Endothelial cell of umbilical vein (primary cell): ENCODE measurements at regions of chr1 and their contacts with region 1.

Region 1: DNA sequence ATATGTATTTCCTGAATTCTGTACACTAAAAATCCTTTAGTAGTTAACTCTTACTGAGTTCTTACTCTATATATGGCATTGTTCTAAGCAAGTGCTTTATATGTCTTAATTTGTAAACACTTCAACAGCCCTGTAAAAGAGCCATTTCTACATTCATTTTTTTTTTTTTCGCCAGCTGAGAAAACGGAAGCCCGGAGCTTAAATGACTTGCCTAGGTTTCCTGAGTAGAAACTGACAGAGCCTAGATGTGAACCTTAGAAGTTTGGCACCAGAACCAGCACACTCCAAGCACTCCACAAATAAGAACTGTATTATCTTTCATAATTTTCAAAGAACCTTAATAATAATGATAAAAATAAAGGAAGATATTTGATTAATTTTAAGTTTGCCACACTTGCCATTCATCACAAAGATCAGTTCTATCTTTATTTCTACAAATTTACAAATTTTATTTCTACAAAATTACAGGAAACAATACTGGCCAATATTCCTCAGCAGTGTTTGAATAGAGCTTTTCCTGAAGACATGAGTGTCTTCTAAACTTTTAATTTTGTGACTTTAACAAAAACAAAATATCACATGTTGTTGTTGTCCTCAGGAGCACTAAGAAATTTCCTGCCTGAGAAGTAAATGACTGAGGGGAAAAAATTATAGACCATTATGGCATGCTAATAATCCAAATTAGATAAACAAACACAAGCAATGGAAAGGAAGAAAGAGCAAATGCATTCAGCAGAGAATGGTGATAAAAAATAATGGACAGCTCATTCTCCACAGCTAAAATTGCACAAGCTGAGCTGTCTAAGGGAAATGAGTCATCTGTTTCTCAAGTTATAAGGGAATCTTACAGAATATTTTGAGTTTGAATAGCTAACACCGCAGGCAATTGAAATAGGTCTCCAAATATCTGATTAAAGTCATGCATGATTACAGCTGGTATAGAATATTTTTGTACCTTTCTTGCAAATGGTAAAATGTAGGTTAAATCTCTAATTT is 71.2 kb downstream of the DPYD start:
- DNase-seq: peak; percentile 93
- H3K4me3 ChIP-seq: peak overlapping the region in 1 of 3 experiments; percentile 49
- H3K27ac ChIP-seq: peak overlapping the region; percentile 68
- H3K4me1 ChIP-seq: peaks cover 24% of the 10 kb centered on the region
- H3K27me3 ChIP-seq: no peaks in the 10 kb centered on the region
- CTCF ChIP-seq: no peak
- POLR2A ChIP-seq: peak; percentile 23

Region 2: GRCh38 chr1:97384294-97384952 is 465.2 kb before region 1 on chr1:
- CTCF ChIA-PET with region 1: no interaction called
- POLR2A ChIA-PET with region 1: no interaction called
- dilution Hi-C with region 1: no loop called
- intact Hi-C with region 1: no loop called
- DNase-seq: peak; percentile 73
- H3K4me3 ChIP-seq: no peak overlapping the region
- H3K27ac ChIP-seq: peak overlapping the region; percentile 55
- H3K4me1 ChIP-seq: peaks cover 13% of the 10 kb centered on the region
- H3K27me3 ChIP-seq: no peaks in the 10 kb centered on the region
- CTCF ChIP-seq: no peak
- POLR2A ChIP-seq: no peak

Region 3: GRCh38 chr1:97796711-97797110 is 52.9 kb before region 1 on chr1:
- CTCF ChIA-PET with region 1: no interaction called
- POLR2A ChIA-PET with region 1: no interaction called
- dilution Hi-C with region 1: no loop called
- intact Hi-C with region 1: loop called (anchors 2 kb)
- DNase-seq: peak; percentile 89
- H3K4me3 ChIP-seq: no peak overlapping the region
- H3K27ac ChIP-seq: peak overlapping the region; percentile 84
- H3K4me1 ChIP-seq: peaks cover 29% of the 10 kb centered on the region
- H3K27me3 ChIP-seq: no peaks in the 10 kb centered on the region
- CTCF ChIP-seq: no peak
- POLR2A ChIP-seq: no peak

Region 4: DNA sequence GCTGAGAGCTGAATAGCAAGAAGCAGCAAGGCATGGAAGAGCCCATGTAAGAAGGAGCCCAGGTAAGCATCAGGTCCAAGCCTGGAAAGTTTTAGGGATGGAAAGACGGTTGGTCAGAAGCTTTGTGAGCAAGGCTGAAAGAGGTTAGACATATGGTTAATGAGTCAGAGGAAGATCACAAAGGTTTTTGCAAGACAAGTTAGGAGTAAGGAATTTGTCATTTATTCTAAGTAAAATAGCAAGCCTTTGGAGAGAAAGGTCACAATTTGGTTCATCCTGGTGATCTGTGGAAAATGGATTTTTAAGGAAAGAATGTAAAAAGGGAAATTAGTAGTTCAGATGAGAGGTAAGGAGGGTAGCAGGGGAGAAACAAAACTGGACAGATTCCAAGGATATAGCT is 35.5 kb before region 1 on chr1:
- CTCF ChIA-PET with region 1: no interaction called
- POLR2A ChIA-PET with region 1: no interaction called
- dilution Hi-C with region 1: no loop called
- intact Hi-C with region 1: no loop called
- DNase-seq: no peak
- H3K4me3 ChIP-seq: no peak overlapping the region
- H3K27ac ChIP-seq: no peak overlapping the region
- H3K4me1 ChIP-seq: no peaks in the 10 kb centered on the region
- H3K27me3 ChIP-seq: no peaks in the 10 kb centered on the region
- CTCF ChIP-seq: no peak
- POLR2A ChIP-seq: no peak

Region 5: GRCh38 chr1:97886199-97886598 is 36.6 kb after region 1 on chr1:
- CTCF ChIA-PET with region 1: no interaction called
- POLR2A ChIA-PET with region 1: no interaction called
- dilution Hi-C with region 1: no loop called
- intact Hi-C with region 1: no loop called
- DNase-seq: no peak
- H3K4me3 ChIP-seq: no peak overlapping the region
- H3K27ac ChIP-seq: no peak overlapping the region
- H3K4me1 ChIP-seq: no peaks in the 10 kb centered on the region
- H3K27me3 ChIP-seq: no peaks in the 10 kb centered on the region
- CTCF ChIP-seq: no peak
- POLR2A ChIP-seq: no peak

Region 6: DNA sequence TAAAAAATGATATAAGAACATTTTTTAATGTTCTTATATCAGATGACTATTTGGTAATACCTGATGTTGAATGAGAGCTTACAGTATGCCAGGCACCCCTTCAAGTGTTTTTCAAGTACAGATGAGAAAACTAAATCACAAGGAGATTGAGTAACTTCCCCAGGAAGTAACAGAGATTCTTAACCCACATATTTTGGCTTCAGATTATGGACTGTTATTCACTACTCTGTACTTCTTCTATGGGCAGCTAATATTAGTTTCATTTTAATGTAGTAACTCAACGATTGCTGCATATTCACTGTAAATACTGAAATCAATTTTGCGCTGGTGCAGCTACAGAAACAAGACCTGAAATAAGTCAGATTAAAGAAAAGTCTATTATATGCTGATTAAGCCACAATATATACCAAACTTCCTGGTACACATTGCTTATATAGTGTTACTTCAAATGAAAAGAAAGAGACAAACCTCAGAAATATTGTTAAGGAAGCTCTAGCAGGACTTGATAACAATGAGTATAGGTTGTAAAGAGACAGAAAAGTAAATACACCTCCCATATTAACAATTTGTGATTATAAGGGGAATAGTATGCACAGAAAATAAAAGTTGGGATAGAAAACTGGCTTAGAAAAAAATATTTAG is 51.5 kb after region 1 on chr1:
- CTCF ChIA-PET with region 1: interaction called, 5 read pairs
- POLR2A ChIA-PET with region 1: no interaction called
- dilution Hi-C with region 1: no loop called
- intact Hi-C with region 1: loop called (anchors 2 kb)
- DNase-seq: peak; percentile 86
- H3K4me3 ChIP-seq: peak overlapping the region; percentile 21 to 88 (median 74)
- H3K27ac ChIP-seq: peak overlapping the region; percentile 92
- H3K4me1 ChIP-seq: peaks cover 44% of the 10 kb centered on the region
- H3K27me3 ChIP-seq: no peaks in the 10 kb centered on the region
- CTCF ChIP-seq: no peak
- POLR2A ChIP-seq: no peak

Region 7: GRCh38 chr1:97920832-97921571 is 71.4 kb after region 1 on chr1 and contains the start of gene DPYD:
- CTCF ChIA-PET with region 1: interaction called, 6 read pairs
- POLR2A ChIA-PET with region 1: interaction called, 4 read pairs
- dilution Hi-C with region 1: no loop called
- intact Hi-C with region 1: loop called (anchors 5 kb)
- DNase-seq: peak; percentile 87
- H3K4me3 ChIP-seq: peak within 1 kb of the TSS; percentile 94 to 97 (median 97)
- H3K27ac ChIP-seq: peak within 1 kb of the TSS; percentile 77
- H3K4me1 ChIP-seq: peaks cover 13% of the 10 kb centered on the region
- H3K27me3 ChIP-seq: no peaks in the 10 kb centered on the region
- CTCF ChIP-seq: no peak
- POLR2A ChIP-seq: peak; percentile 41
- total RNA-seq, gene DPYD: 15.1 and 17.9 TPM in 2 replicates